ENCODE measurements at regions of chr6 and their contacts with region 1.

Region 1: GRCh38 chr6:29847871-29848630 is 20.4 kb downstream of the HLA-G start:
- DNase-seq: peak; percentile 90
- H3K4me3 Mint-ChIP-seq: no peak overlapping the region
- H3K27ac Mint-ChIP-seq: no peak overlapping the region
- H3K4me1 Mint-ChIP-seq: peaks cover 25% of the 10 kb centered on the region
- H3K27me3 Mint-ChIP-seq: peaks cover 38% of the 10 kb centered on the region

Region 2: GRCh38 chr6:29942275-29943052 is 94.4 kb after region 1 on chr6 and contains the start of gene HLA-A:
- CTCF ChIA-PET with region 1: no interaction called
- intact Hi-C with region 1: loop called (anchors 1 kb)
- DNase-seq: peak; percentile 97
- H3K4me3 Mint-ChIP-seq: peak within 1 kb of the TSS; percentile 97
- H3K27ac Mint-ChIP-seq: peak within 1 kb of the TSS; percentile 99
- H3K4me1 Mint-ChIP-seq: peaks cover 53% of the 10 kb centered on the region
- H3K27me3 Mint-ChIP-seq: no peaks in the 10 kb centered on the region
- total RNA-seq, gene HLA-A: 1,509 to 1,515 TPM

Region 3: GRCh38 chr6:29976588-29977424 is 128.8 kb after region 1 on chr6:
- CTCF ChIA-PET with region 1: interaction called, 12 read pairs
- intact Hi-C with region 1: no loop called
- DNase-seq: peak; percentile 76
- H3K4me3 Mint-ChIP-seq: peak overlapping the region; percentile 81
- H3K27ac Mint-ChIP-seq: no peak overlapping the region
- H3K4me1 Mint-ChIP-seq: peaks cover 31% of the 10 kb centered on the region
- H3K27me3 Mint-ChIP-seq: peaks cover 34% of the 10 kb centered on the region

Region 4: GRCh38 chr6:30000156-30000791 is 152.2 kb after region 1 on chr6:
- CTCF ChIA-PET with region 1: no interaction called
- intact Hi-C with region 1: no loop called
- DNase-seq: no peak
- H3K4me3 Mint-ChIP-seq: no peak overlapping the region
- H3K27ac Mint-ChIP-seq: no peak overlapping the region
- H3K4me1 Mint-ChIP-seq: no peaks in the 10 kb centered on the region
- H3K27me3 Mint-ChIP-seq: peaks cover 4% of the 10 kb centered on the region

Region 5: GRCh38 chr6:30061092-30061857 is 213.2 kb after region 1 on chr6 and contains the start of gene POLR1H:
- CTCF ChIA-PET with region 1: no interaction called
- intact Hi-C with region 1: loop called (anchors 5 kb)
- DNase-seq: peak; percentile 94
- H3K4me3 Mint-ChIP-seq: peak within 1 kb of the TSS; percentile 98
- H3K27ac Mint-ChIP-seq: peak within 1 kb of the TSS; percentile 98
- H3K4me1 Mint-ChIP-seq: peaks cover 34% of the 10 kb centered on the region
- H3K27me3 Mint-ChIP-seq: no peaks in the 10 kb centered on the region
- total RNA-seq, gene POLR1H: 74.6 to 77.8 TPM

Region 6: DNA sequence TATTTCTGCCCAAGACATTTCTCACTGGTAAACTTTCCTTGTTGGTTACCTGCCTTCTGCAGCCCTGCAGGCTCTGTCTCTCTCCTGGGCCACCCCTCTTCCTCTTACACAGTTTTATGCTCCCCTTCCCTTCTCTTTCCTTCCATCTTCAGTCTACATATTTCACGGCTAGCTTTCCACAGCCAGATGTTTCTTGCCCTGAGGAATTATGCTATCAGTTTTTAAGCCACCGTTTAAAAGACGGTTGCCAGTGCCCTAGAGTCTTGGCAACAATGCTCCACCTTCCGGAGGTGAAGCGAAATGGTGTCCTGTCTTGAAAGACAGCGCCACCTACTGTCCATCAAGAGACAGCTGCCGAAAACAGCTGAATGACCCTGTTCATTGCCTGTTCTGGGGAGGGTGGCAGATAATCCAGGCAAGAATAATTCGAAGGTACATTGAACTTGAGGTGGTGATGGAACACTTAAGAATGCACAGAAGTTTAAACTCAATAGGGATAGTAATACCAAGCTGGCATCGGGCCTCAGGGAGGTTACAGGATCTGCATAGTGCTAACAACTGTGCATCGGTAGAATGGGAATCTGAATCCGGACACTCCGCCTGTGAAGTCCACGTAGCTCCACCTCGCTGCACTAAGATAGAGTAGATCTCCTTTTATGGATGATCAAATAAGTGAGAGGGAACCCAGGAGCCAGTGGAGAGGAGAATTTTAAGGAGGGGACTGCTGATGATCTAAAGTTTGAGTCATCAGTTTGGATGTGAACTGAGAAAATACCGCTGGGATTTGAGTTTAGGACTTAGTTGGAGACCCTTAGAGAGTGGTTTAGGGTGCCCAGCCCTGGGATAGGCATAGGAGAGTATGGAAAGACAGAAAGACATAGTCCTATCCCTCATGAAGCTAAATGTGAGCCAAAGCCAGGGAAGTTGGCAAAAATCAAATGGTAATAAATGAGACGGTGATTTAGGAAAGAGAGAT is 283.1 kb after region 1 on chr6:
- CTCF ChIA-PET with region 1: no interaction called
- intact Hi-C with region 1: loop called (anchors 1 kb)
- DNase-seq: peak; percentile 80
- H3K4me3 Mint-ChIP-seq: no peak overlapping the region
- H3K27ac Mint-ChIP-seq: no peak overlapping the region
- H3K4me1 Mint-ChIP-seq: peaks cover 15% of the 10 kb centered on the region
- H3K27me3 Mint-ChIP-seq: peaks cover 51% of the 10 kb centered on the region